A549 (cell line): ENCODE measurements at regions of chr1 and their contacts with region 1.

Region 1: DNA sequence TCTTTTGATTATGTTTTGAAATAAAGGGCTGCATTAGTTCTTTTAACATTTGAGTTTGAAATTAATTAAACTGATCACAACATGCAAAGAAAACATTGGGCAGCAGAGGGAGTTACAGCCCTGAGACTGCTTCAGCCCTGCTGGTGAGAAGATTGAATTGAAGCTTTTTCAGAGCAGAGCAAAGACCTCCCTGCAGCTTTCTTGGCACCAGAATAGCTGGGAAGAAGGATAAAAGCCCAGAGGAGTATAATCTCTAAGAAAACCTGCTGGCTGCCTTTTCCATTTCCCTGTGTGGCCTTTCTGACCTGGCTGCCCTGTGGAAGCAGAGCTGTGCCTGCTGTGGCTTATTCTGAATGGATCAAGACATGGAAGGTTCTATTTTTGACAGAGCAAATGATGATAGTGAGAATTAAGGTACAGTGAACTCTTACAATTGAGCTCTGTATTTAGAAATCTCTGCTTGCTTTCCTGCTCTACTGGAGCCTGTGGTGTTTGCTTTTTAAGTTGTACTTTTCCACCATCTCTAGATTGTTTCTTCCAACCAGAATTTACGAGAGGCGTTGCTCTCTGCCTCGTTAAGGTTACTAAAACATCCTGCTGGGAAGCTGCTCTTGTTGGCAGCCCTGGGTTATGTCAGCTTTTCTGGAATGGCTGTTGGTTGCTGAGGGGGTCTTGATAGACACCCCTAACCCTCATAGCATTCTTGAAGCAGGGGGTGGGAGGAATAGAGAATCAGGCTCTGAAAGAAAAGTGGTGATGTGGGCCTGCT is 9.9 kb downstream of the SNRPE start:
- DNase-seq: peak; percentile 76 to 94
- ATAC-seq: peak; percentile 94 to 96
- H3K4me3 ChIP-seq: no peak overlapping the region
- H3K27ac ChIP-seq: peak overlapping the region in 1 of 2 experiments; percentile 23; a peak in 1 of 6 replicates
- H3K4me1 ChIP-seq: peaks cover 6% of the 10 kb centered on the region; the same call in 2 of the 3 replicates
- CTCF ChIP-seq: peak; percentile 96
- EP300 ChIP-seq: no peak
- POLR2A ChIP-seq: no peak
- RAD21 ChIP-seq: peak; percentile 96 to 98

Region 2: GRCh38 chr1:203428981-203429599 is 442.2 kb before region 1 on chr1:
- CTCF ChIA-PET with region 1: no interaction called
- POLR2A ChIA-PET with region 1: no interaction called
- DNase-seq: no peak
- ATAC-seq: 0 out of 6 replicates have a peak, but pooled peaks of 1 of the 2 experiments have one; percentile 21
- H3K4me3 ChIP-seq: no peak overlapping the region
- H3K27ac ChIP-seq: no peak overlapping the region
- H3K4me1 ChIP-seq: peaks cover 13% of the 10 kb centered on the region; the same call in 2 of the 3 replicates
- CTCF ChIP-seq: no peak
- EP300 ChIP-seq: no peak
- POLR2A ChIP-seq: no peak
- RAD21 ChIP-seq: no peak

Region 3: DNA sequence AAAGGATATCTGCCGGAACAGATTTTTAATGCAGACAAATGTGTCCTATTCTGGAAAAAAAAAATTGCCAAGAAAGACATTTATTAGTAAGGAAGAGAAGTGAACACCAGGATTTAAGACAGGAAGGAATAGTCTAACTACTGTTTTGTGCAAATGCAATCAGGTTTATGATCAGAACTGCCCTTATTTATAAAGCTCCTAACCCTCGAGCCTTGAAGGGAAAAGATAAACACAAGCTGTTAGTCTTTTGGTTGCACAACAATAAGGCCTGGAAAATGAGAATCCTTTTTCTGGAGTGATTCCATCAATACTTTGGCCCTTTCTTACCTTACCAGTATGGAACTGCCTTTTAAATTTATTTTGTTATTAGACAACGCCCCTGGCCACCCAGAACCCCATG is 43.0 kb after region 1 on chr1:
- CTCF ChIA-PET with region 1: interaction called, 15 read pairs
- POLR2A ChIA-PET with region 1: no interaction called
- DNase-seq: no peak
- ATAC-seq: no peak
- H3K4me3 ChIP-seq: no peak overlapping the region
- H3K27ac ChIP-seq: no peak overlapping the region
- H3K4me1 ChIP-seq: peaks cover 11% of the 10 kb centered on the region; the same call in 2 of the 3 replicates
- CTCF ChIP-seq: no peak
- EP300 ChIP-seq: no peak
- POLR2A ChIP-seq: no peak
- RAD21 ChIP-seq: no peak

Region 4: GRCh38 chr1:204027446-204027845 is 156.2 kb after region 1 on chr1:
- CTCF ChIA-PET with region 1: interaction called, 10 read pairs
- POLR2A ChIA-PET with region 1: no interaction called
- DNase-seq: no peak
- ATAC-seq: no peak
- H3K4me3 ChIP-seq: no peak overlapping the region
- H3K27ac ChIP-seq: no peak overlapping the region
- H3K4me1 ChIP-seq: no peaks in the 10 kb centered on the region
- CTCF ChIP-seq: no peak
- EP300 ChIP-seq: no peak
- POLR2A ChIP-seq: no peak
- RAD21 ChIP-seq: no peak

Region 5: GRCh38 chr1:204072931-204073836 is 201.9 kb after region 1 on chr1 and contains the start of gene SOX13:
- CTCF ChIA-PET with region 1: interaction called, 53 read pairs
- POLR2A ChIA-PET with region 1: interaction called, 14 read pairs
- DNase-seq: peak; percentile 91 to 95
- ATAC-seq: peak; percentile 85 to 91
- H3K4me3 ChIP-seq: peak within 1 kb of the TSS; percentile 86
- H3K27ac ChIP-seq: peak within 1 kb of the TSS; percentile 82 to 90
- H3K4me1 ChIP-seq: peaks cover 8% of the 10 kb centered on the region
- CTCF ChIP-seq: peak; percentile 22; the same call in 2 of the 3 replicates
- EP300 ChIP-seq: no peak
- POLR2A ChIP-seq: peak; percentile 97
- RAD21 ChIP-seq: peak; percentile 53 to 67
- polyA plus RNA-seq, gene SOX13: 9.8 TPM in 2 replicates

Region 6: GRCh38 chr1:204128964-204129896 is 257.9 kb after region 1 on chr1:
- CTCF ChIA-PET with region 1: interaction called, 757 read pairs
- POLR2A ChIA-PET with region 1: interaction called, 40 read pairs
- DNase-seq: peak; percentile 62 to 94
- ATAC-seq: peak; percentile 78 to 91
- H3K4me3 ChIP-seq: peak overlapping the region; percentile 23; the same call in 2 of the 3 replicates
- H3K27ac ChIP-seq: peak overlapping the region; percentile 47 to 78; a peak in 5 of 6 replicates
- H3K4me1 ChIP-seq: peaks cover 31% of the 10 kb centered on the region
- CTCF ChIP-seq: peak; percentile 90
- EP300 ChIP-seq: no peak
- POLR2A ChIP-seq: no peak
- RAD21 ChIP-seq: peak; percentile 83 to 93